ENCODE measurements at regions of chr12 and their contacts with region 1.

Region 1: GRCh38 chr12:51970904-51971646 is 19.6 kb downstream of the ACVR1B start:
- DNase-seq: peak; percentile 79
- H3K4me3 Mint-ChIP-seq: peak overlapping the region; percentile 55
- H3K27ac Mint-ChIP-seq: peak overlapping the region; percentile 82
- H3K4me1 Mint-ChIP-seq: peaks cover 61% of the 10 kb centered on the region
- H3K27me3 Mint-ChIP-seq: no peaks in the 10 kb centered on the region

Region 2: GRCh38 chr12:51391283-51392162 is 579.6 kb before region 1 on chr12 and contains the start of gene GALNT6:
- CTCF ChIA-PET with region 1: no interaction called
- intact Hi-C with region 1: loop called (anchors 1 kb)
- DNase-seq: peak; percentile 68
- H3K4me3 Mint-ChIP-seq: peak within 1 kb of the TSS; percentile 83
- H3K27ac Mint-ChIP-seq: peak within 1 kb of the TSS; percentile 38
- H3K4me1 Mint-ChIP-seq: peaks cover 71% of the 10 kb centered on the region
- H3K27me3 Mint-ChIP-seq: no peaks in the 10 kb centered on the region
- total RNA-seq, gene GALNT6: 5.1 to 5.4 TPM

Region 3: GRCh38 chr12:51886021-51886322 is 85.1 kb before region 1 on chr12:
- CTCF ChIA-PET with region 1: no interaction called
- intact Hi-C with region 1: loop called (anchors 1 kb)
- DNase-seq: peak; percentile 78
- H3K4me3 Mint-ChIP-seq: peak overlapping the region; percentile 2
- H3K27ac Mint-ChIP-seq: peak overlapping the region; percentile 81
- H3K4me1 Mint-ChIP-seq: peaks cover 10% of the 10 kb centered on the region
- H3K27me3 Mint-ChIP-seq: no peaks in the 10 kb centered on the region

Region 4: DNA sequence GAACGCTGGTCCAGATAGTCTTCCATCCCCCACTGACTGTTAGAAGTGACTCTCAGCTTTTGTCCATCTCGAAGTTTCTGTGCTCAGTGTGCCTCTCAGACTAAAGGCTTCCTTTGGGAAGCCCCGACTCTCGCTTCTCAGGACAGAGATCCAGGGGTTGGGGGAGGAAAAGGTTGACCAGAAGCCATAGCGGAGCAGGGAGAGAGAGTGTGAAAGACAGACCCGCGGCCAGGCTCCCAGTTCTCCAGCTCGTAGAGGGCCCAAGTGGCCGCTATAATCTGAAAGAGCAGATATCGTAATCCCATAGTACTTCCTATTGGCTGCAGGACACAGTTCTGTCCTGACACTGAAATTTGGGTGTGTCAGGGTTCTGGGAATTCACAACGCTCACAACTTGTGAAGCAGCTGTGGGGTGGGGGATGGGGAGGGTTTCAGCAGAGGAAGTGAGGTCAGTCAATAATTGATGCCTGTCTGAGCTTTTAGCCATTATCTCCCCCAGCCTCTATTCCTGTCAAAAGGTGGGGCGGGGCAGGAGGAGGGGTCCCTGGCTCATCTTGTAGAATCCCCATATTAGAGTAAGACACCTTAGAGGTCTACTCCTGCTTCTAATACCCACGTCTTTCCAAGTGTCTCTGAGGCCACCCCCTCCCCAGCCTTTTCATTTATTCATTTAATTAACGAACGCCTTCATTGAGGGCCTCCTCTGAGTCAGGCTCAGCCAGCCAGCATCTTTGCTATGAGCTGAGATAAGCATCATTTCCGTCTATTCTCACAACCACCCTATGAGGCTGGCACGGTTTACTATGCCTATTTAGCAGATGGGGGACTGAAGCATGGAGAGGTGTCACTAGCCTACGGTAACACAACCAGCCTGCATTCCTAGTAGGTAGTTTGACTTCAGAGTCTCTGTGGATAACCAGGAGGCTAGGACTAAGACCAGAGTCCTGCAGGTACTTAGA is 65.3 kb before region 1 on chr12:
- CTCF ChIA-PET with region 1: no interaction called
- intact Hi-C with region 1: no loop called
- DNase-seq: no peak
- H3K4me3 Mint-ChIP-seq: no peak overlapping the region
- H3K27ac Mint-ChIP-seq: no peak overlapping the region
- H3K4me1 Mint-ChIP-seq: no peaks in the 10 kb centered on the region
- H3K27me3 Mint-ChIP-seq: peaks cover 19% of the 10 kb centered on the region

Region 5: GRCh38 chr12:52050761-52051541 is 79.9 kb after region 1 on chr12 and contains the start of gene NR4A1:
- CTCF ChIA-PET with region 1: no interaction called
- intact Hi-C with region 1: loop called (anchors 1 kb)
- DNase-seq: peak; percentile 99
- H3K4me3 Mint-ChIP-seq: peak within 1 kb of the TSS; percentile 98
- H3K27ac Mint-ChIP-seq: peak within 1 kb of the TSS; percentile 84
- H3K4me1 Mint-ChIP-seq: peaks cover 44% of the 10 kb centered on the region
- H3K27me3 Mint-ChIP-seq: no peaks in the 10 kb centered on the region
- total RNA-seq, gene NR4A1: 64.2 to 64.8 TPM

Region 6: DNA sequence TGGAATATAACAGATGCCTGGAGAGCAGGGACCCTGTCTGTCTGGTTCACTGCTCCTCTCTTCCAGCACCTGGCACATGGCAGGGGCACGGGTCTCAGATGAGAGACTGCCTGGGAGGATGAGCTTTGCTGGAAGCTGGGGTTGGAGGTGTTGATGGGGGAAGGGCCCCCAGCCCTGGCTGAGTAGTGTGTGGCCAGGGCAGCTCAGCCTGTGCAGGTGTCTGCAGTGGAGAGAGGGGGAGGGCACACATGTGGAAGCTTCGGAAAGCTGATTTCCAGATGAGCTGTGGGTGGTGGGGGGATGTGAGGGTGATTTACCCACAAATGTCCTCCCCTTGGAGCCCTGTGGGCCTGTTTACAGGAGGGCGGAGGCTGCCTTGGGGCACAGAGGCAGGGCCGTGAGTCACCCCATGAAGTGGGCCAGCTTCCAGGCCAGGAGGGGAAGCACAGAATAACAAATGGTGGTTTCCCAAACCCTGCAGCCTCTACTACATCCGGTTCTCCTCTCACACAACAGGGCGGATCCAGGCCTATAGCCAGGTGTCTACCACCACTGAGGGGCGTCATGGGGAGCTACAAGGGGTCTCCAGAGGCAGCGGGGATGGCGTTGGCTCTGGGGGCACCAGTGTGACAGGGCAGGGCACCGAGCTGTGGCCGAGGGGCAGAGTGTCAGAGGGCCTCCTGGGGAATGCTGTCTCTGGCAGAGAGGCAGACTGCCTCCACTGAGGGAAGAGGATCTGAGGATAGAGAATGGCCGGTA is 273.0 kb after region 1 on chr12:
- CTCF ChIA-PET with region 1: no interaction called
- intact Hi-C with region 1: loop called (anchors 1 kb)
- DNase-seq: peak; percentile 94
- H3K4me3 Mint-ChIP-seq: peak overlapping the region; percentile 71
- H3K27ac Mint-ChIP-seq: peak overlapping the region; percentile 73
- H3K4me1 Mint-ChIP-seq: peaks cover 15% of the 10 kb centered on the region
- H3K27me3 Mint-ChIP-seq: peaks cover 6% of the 10 kb centered on the region